CD8-positive, alpha-beta T cell (primary cell): ENCODE measurements at regions of chr12 and their contacts with region 1.

Region 1: DNA sequence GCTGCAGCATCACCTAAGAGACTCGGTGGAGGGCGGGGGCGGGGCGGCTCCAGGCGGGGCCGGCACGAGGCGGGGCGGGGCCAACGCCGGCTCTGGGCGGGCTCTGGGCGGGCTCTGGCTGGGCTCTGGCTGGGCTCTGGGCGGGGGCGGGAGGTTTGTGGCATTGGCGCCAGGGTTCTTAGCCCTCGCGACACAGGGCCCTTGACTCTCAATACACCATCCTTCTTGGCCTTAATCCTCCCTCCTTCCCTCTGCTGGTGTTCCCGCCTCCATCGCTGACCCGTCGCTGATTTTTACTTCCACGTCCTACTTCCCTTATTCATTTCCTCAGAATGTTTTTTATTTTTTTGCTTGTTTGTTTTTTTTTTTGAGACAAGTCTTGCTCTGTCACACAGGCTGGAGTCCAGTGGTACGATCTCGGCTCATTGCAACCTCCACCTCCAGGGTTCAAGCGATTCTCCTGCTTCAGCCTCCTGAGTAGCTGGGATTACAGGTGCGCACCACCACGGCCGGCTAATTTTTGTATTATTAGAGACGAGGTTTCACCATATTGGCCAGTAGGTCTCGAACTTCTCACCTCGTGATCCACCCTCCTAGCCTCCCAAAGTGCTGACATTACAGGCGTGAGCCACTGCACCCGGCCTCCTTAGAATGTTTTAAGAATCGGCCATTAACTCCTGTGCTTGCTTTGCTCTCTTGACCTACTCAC is at the start of gene BLTP3B:
- DNase-seq: peak; percentile 86 to 92 (median 89)
- ATAC-seq: peak; percentile 96
- H3K4me3 ChIP-seq: peak within 1 kb of the TSS; percentile 94 to 97
- H3K4me3 Mint-ChIP-seq: peak within 1 kb of the TSS; percentile 93
- H3K27ac ChIP-seq: peak within 1 kb of the TSS; percentile 90 to 95
- H3K27ac Mint-ChIP-seq: peak within 1 kb of the TSS; percentile 97
- H3K4me1 ChIP-seq: peaks cover 6% of the 10 kb centered on the region
- H3K4me1 Mint-ChIP-seq: peaks cover 36% of the 10 kb centered on the region
- H3K27me3 ChIP-seq: no peaks in the 10 kb centered on the region
- H3K27me3 Mint-ChIP-seq: no peaks in the 10 kb centered on the region
- CTCF ChIP-seq: no peak
- total RNA-seq, gene BLTP3B: 29.4 to 37.8 TPM

Region 2: GRCh38 chr12:98593351-98594049 is 1549.5 kb before region 1 on chr12 and contains the start of gene SLC25A3:
- CTCF ChIA-PET with region 1: no interaction called
- POLR2A ChIA-PET with region 1: no interaction called
- intact Hi-C with region 1: loop called in 1 of 2 experiments (anchors 10 kb)
- DNase-seq: peak; percentile 90 to 99 (median 95)
- ATAC-seq: peak; percentile 92
- H3K4me3 ChIP-seq: peak within 1 kb of the TSS; percentile 89 to 97
- H3K4me3 Mint-ChIP-seq: peak within 1 kb of the TSS; percentile 97
- H3K27ac ChIP-seq: peak within 1 kb of the TSS; percentile 92 to 99
- H3K27ac Mint-ChIP-seq: peak within 1 kb of the TSS; percentile 98
- H3K4me1 ChIP-seq: peaks cover 23% of the 10 kb centered on the region
- H3K4me1 Mint-ChIP-seq: peaks cover 39% of the 10 kb centered on the region
- H3K27me3 ChIP-seq: no peaks in the 10 kb centered on the region
- H3K27me3 Mint-ChIP-seq: no peaks in the 10 kb centered on the region
- CTCF ChIP-seq: no peak
- total RNA-seq, gene SLC25A3: 686 TPM

Region 3: GRCh38 chr12:98644711-98645402 is 1498.1 kb before region 1 on chr12 and contains the starts of genes APAF1 and IKBIP:
- CTCF ChIA-PET with region 1: no interaction called
- POLR2A ChIA-PET with region 1: no interaction called
- intact Hi-C with region 1: loop called in 1 of 2 experiments (anchors 5 kb)
- DNase-seq: peak; percentile 94 to 99 (median 97)
- ATAC-seq: peak; percentile 89
- H3K4me3 ChIP-seq: peak within 1 kb of the TSS; percentile 93 to 99
- H3K4me3 Mint-ChIP-seq: peak within 1 kb of the TSS; percentile 99
- H3K27ac ChIP-seq: peak within 1 kb of the TSS; percentile 60 to 90
- H3K27ac Mint-ChIP-seq: peak within 1 kb of the TSS; percentile 94
- H3K4me1 ChIP-seq: peaks cover 14% of the 10 kb centered on the region
- H3K4me1 Mint-ChIP-seq: peaks cover 44% of the 10 kb centered on the region
- H3K27me3 ChIP-seq: no peaks in the 10 kb centered on the region
- H3K27me3 Mint-ChIP-seq: no peaks in the 10 kb centered on the region
- CTCF ChIP-seq: no peak
- total RNA-seq, gene APAF1: 10.5 to 11.9 TPM
- total RNA-seq, gene IKBIP: 1.4 to 1.9 TPM

Region 4: GRCh38 chr12:99984271-99985128 is 158.5 kb before region 1 on chr12 and contains the start of gene ANKS1B:
- CTCF ChIA-PET with region 1: no interaction called
- POLR2A ChIA-PET with region 1: no interaction called
- intact Hi-C with region 1: no loop called
- DNase-seq: no peak
- ATAC-seq: no peak
- H3K4me3 ChIP-seq: no peak within 1 kb of the TSS
- H3K4me3 Mint-ChIP-seq: peak within 1 kb of the TSS; percentile 54
- H3K27ac ChIP-seq: no peak within 1 kb of the TSS
- H3K27ac Mint-ChIP-seq: no peak within 1 kb of the TSS
- H3K4me1 ChIP-seq: no peaks in the 10 kb centered on the region
- H3K4me1 Mint-ChIP-seq: peaks cover 14% of the 10 kb centered on the region
- H3K27me3 ChIP-seq: peaks cover 0 to 2% of the 10 kb centered on the region in 2 experiments
- H3K27me3 Mint-ChIP-seq: peaks cover 43% of the 10 kb centered on the region
- CTCF ChIP-seq: no peak
- total RNA-seq, gene ANKS1B: not detected

Region 5: DNA sequence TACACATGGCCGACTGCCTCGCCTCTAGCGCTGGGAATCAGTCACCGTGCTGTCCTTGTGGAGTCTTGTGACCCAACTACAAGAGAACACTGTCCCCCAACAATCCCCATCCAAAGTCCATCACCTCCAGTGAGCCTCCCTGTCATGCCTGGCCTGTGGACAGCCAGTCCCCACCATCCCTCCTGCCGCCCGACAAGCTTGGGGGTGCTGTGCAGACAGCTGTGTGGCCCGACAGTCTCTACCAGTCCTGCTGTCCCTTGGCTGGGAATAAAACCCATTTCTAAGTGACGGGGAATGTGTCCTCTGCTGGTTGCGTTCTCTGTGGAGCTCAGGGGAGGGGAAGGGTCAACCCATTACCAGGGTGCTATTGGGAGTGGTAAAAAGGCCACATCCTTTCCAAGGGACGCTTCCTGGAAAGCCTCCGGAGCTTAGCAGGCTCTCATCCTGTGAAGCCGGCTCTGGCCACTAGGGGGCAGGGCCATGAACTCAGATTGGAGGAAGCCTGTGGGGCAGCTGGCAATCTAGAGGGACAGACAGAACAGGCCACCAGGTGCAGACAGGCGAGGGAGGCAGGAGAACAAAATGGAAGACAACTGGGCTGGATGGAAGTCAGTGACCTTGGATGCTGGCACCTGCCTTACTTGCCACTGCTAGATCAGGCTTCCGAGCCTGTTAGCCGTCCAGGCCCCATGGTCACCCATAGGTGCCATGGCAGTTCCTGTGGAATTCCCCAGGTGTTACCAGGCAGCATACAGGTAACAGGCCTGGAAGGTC is 11.7 kb after region 1 on chr12:
- CTCF ChIA-PET with region 1: interaction called, 20 read pairs
- POLR2A ChIA-PET with region 1: no interaction called
- intact Hi-C with region 1: no loop called
- DNase-seq: peak; percentile 46 to 81 (median 72)
- ATAC-seq: peak; percentile 72
- H3K4me3 ChIP-seq: no peak overlapping the region
- H3K4me3 Mint-ChIP-seq: no peak overlapping the region
- H3K27ac ChIP-seq: no peak overlapping the region
- H3K27ac Mint-ChIP-seq: no peak overlapping the region
- H3K4me1 ChIP-seq: peaks cover 4% of the 10 kb centered on the region
- H3K4me1 Mint-ChIP-seq: peaks cover 4% of the 10 kb centered on the region
- H3K27me3 ChIP-seq: no peaks in the 10 kb centered on the region
- H3K27me3 Mint-ChIP-seq: no peaks in the 10 kb centered on the region
- CTCF ChIP-seq: peak; percentile 84

Region 6: GRCh38 chr12:100163416-100164152 is 20.6 kb after region 1 on chr12:
- CTCF ChIA-PET with region 1: interaction called, 4 read pairs
- POLR2A ChIA-PET with region 1: no interaction called
- intact Hi-C with region 1: loop called (anchors 2 kb)
- DNase-seq: peak; percentile 38 to 81 (median 70)
- ATAC-seq: peak; percentile 100
- H3K4me3 ChIP-seq: peak overlapping the region in 1 of 2 experiments; percentile 19
- H3K4me3 Mint-ChIP-seq: peak overlapping the region; percentile 71
- H3K27ac ChIP-seq: no peak overlapping the region
- H3K27ac Mint-ChIP-seq: no peak overlapping the region
- H3K4me1 ChIP-seq: peaks cover 9% of the 10 kb centered on the region
- H3K4me1 Mint-ChIP-seq: peaks cover 11% of the 10 kb centered on the region
- H3K27me3 ChIP-seq: no peaks in the 10 kb centered on the region
- H3K27me3 Mint-ChIP-seq: no peaks in the 10 kb centered on the region
- CTCF ChIP-seq: peak; percentile 28

Region 7: DNA sequence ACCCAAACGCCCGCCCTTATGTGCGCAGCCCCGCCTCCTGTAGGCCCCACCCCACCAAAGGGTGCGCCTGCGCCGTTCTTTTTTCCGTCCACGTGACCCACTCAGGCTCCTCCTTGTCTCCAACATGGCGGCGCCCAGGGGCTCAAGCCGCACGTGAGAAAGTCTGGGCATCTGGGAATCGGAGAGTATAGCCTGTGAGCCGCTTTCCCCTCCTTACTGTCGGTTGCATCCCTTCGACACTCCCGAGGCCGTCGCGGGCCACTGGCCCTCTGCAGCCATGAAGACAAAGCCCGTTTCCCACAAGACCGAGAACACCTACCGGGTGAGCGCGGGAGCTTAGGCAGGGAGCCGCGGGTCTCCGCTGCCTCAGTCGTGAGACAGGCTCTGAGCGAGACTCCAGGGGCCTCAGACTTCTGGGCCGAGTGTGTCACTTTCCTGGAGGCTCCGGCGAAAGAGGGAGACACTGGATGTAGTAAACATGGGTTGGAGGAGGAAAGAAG is 1137.1 kb after region 1 on chr12 and contains the start of gene UTP20:
- CTCF ChIA-PET with region 1: no interaction called
- POLR2A ChIA-PET with region 1: no interaction called
- intact Hi-C with region 1: loop called (anchors 2 to 5 kb)
- DNase-seq: peak; percentile 84 to 96 (median 94)
- ATAC-seq: peak; percentile 100
- H3K4me3 ChIP-seq: peak within 1 kb of the TSS; percentile 98 to 100
- H3K4me3 Mint-ChIP-seq: peak within 1 kb of the TSS; percentile 96
- H3K27ac ChIP-seq: peak within 1 kb of the TSS; percentile 30 to 65
- H3K27ac Mint-ChIP-seq: peak within 1 kb of the TSS; percentile 80
- H3K4me1 ChIP-seq: peaks cover 11% of the 10 kb centered on the region
- H3K4me1 Mint-ChIP-seq: peaks cover 26% of the 10 kb centered on the region
- H3K27me3 ChIP-seq: peaks cover 0 to 4% of the 10 kb centered on the region in 2 experiments
- H3K27me3 Mint-ChIP-seq: peaks cover 6% of the 10 kb centered on the region
- CTCF ChIP-seq: no peak
- total RNA-seq, gene UTP20: 11.2 to 12.9 TPM